Left ventricle myocardium superior (tissue), 1 donor: ENCODE measurements at regions of chr2 and their contacts with region 1.

Region 1: GRCh38 chr2:39227628-39228412 is 15.9 kb downstream of the CDKL4 start:
- DNase-seq: peak; percentile 86
- ATAC-seq: peak; percentile 89

Region 2: DNA sequence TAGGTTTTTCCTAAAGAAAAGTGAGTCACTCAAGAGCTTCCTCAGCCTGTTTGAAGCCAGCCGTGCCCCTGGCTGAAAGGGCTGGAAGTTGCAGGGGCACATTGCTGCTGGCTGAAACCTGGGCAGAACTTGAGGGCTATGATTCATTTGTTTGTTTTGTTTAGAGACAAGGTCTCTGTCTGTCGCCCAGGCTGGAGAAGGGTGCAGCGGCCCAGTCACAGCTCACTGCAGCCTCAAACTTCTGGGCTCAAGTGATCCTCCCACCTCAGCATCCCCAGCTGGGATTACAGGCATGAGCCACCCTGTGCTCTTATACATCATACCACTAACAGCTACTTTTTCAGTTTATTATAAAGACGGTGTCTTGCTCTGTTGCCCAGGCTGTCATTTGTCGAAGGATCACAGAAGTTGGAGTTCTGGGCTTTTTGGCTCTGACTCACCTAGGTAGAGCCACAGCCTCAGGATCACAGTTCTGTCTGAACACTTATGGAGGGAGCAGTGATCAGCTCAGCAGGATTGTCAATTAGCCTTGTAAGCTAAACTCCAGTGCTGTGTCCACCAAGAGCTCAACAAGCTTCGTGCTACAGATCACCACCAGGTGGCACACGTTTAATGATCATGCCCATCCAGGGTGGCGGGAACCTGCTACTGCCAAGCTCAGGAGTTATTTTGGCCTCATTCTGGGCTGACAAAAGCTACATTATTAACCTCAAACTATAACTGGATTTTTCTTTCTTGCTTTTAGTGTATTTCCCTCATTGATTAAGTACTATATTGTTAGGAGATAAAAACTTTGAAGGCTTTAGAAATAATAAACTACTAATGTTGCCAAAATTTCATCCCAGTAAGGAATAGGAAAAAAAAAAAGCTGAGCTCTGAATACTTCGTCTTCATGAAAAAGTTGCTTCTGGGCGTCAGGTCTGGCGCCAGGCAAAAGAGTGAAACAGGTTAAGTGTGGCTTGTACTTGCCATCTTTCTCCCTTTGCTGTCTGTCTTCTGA is 280.3 kb before region 1 on chr2:
- intact Hi-C with region 1: loop called (anchors 5 kb)
- DNase-seq: peak; percentile 62
- ATAC-seq: peak; percentile 71

Region 3: GRCh38 chr2:39061280-39061679 is 166.5 kb before region 1 on chr2:
- intact Hi-C with region 1: loop called (anchors 2 kb)
- DNase-seq: no peak
- ATAC-seq: no peak

Region 4: GRCh38 chr2:39119732-39120520 is 107.9 kb before region 1 on chr2:
- intact Hi-C with region 1: loop called (anchors 5 kb)
- DNase-seq: peak; percentile 77
- ATAC-seq: peak; percentile 62

Region 5: GRCh38 chr2:39175026-39175812 is 52.6 kb before region 1 on chr2:
- intact Hi-C with region 1: no loop called
- DNase-seq: no peak
- ATAC-seq: no peak